ENCODE measurements at regions of chr1 and their contacts with region 1.

Region 1: DNA sequence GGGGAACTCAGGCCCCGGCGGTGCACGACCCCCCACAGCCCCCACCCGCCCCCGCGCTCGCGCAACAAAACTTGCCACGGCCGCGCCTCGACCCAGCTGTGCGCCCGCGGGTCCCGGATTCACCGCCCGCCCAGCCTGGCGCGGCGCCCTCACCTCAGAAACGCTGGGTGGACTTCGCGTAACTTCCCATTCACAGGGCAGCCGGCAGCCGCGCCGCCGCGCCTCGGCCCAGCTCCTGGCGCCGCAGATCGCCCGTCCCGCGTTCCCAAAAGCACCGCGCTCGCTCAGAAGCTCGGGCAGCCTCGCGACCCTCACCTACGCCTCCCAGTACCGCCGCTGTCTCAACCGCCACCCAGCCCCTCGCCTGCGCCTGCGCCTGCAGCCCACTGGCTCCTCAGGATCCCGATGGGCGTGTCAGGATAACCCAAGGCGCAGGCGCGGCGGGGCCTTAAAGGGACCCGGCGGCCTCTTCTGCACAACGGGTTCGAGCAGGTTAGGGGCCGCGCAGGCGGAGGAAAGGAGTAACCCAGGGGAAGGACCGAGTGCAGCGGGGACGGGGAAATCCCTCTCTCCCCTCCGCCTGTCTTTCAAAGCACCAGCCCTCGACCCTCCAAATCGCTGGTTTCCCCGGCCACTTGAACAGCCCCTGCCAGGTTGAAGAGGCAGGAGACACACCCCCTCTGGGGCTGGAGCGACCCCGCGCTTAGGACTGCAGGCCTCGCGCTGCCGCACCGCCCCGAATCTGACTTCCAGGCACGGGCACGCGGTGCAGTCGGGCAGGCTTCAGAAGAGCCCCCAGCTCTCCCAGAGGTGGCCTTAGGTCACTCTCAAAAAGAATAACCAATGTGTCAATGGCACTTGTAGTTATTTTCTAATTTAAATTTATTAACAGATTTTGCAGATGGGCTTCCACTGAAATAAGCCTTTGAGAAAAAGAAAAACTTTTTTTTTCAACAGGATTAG is at the start of gene NBPF1:
- DNase-seq: peak; percentile 99
- H3K4me3 Mint-ChIP-seq: no peak within 1 kb of the TSS
- H3K27ac Mint-ChIP-seq: no peak within 1 kb of the TSS
- H3K4me1 Mint-ChIP-seq: no peaks in the 10 kb centered on the region
- H3K27me3 Mint-ChIP-seq: no peaks in the 10 kb centered on the region
- CTCF ChIP-seq: no peak
- total RNA-seq, gene NBPF1: 28.9 and 31.5 TPM in 2 replicates

Region 2: DNA sequence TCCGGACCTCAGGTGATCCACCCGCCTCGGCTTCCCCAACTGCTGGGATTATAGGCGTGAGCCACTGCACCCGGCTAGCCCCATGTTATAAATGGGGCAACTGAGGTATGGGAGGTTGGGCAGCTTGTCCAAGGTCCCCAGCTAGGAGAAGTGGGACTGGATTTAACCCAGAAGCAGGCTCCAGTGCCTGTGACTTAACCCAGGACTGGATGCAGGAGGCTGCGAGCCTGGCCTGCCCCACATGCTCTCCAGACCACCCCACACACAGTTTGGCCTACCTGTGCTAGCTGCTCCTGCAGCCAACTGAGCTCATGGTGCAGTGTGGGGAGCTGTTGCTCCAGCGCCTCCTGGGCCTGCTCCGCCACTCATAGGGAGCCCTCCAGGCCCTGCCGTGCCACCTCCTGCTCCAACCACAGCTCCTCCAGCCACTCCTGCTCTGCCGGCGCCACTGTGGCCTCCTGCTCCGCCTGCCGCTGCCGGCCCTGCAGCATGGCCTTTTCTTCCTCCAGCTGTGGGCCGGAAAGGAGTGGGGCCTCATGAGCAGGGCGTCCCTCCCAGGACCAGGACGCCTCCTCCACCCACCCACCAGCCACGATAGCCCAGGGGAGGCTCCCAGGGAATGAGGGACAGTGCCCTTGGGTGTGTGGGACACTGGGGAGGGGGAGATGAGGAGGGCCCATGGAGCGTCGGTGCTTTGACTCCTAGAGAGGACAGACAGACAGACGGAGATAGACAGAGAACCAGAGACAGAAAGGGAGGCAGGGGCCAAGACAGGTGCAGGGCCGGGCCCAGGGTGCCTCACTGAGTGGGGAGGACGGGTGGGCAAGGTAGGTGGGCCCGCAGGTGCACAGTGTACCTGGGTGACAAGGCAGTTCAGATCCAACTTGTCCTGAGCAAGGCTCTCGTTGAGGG is 12.3 kb after region 1 on chr1:
- CTCF ChIA-PET with region 1: interaction called, 9 read pairs
- POLR2A ChIA-PET with region 1: interaction called, 57 read pairs
- intact Hi-C with region 1: no loop called
- DNase-seq: no peak
- H3K4me3 Mint-ChIP-seq: no peak overlapping the region
- H3K27ac Mint-ChIP-seq: peak overlapping the region; percentile 12
- H3K4me1 Mint-ChIP-seq: no peaks in the 10 kb centered on the region
- H3K27me3 Mint-ChIP-seq: no peaks in the 10 kb centered on the region
- CTCF ChIP-seq: no peak

Region 3: GRCh38 chr1:16644193-16644481 is 30.7 kb after region 1 on chr1:
- CTCF ChIA-PET with region 1: no interaction called
- POLR2A ChIA-PET with region 1: interaction called, 17 read pairs
- intact Hi-C with region 1: no loop called
- DNase-seq: no peak
- H3K4me3 Mint-ChIP-seq: no peak overlapping the region
- H3K27ac Mint-ChIP-seq: no peak overlapping the region
- H3K4me1 Mint-ChIP-seq: no peaks in the 10 kb centered on the region
- H3K27me3 Mint-ChIP-seq: no peaks in the 10 kb centered on the region
- CTCF ChIP-seq: no peak